ENCODE measurements at regions of chr1 and their contacts with region 1.

Region 1: DNA sequence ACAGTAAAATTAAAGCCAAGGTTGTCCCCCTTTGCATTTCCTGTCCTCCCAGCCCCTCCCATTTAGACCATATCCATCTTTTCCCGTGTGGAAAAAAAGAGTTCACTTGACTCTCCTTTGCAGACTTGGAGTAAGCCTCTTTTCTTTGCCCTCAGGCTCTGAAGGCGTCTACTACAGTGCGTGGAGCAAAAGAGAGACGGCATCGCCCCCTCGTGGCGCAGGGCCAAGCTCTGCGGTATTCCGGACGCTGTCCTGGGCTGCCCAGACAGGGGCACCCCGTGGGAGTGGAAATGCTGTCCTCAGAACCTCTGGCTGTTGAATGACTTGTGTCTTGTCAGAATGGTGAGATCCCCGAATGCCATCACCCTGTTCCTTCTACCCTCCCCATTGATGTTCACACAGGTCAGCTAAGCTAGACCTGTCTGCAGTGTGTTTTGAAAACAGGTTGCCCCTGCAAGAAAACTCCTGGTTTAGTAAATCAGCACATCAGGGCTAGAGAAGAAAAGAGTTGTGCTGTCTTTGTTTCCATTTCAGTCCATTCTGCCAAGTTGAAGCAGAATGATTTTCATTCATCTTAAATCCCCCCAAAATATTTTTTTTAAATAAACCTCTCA is 12.3 kb upstream of the GJA8 start:
- ATAC-seq: peak; percentile 84 to 100 (median 99)
- H3K4me3 ChIP-seq: no peak overlapping the region
- H3K27ac ChIP-seq: no peak overlapping the region
- H3K4me1 ChIP-seq: peaks cover 10 to 16% of the 10 kb centered on the region in 2 donors

Region 2: DNA sequence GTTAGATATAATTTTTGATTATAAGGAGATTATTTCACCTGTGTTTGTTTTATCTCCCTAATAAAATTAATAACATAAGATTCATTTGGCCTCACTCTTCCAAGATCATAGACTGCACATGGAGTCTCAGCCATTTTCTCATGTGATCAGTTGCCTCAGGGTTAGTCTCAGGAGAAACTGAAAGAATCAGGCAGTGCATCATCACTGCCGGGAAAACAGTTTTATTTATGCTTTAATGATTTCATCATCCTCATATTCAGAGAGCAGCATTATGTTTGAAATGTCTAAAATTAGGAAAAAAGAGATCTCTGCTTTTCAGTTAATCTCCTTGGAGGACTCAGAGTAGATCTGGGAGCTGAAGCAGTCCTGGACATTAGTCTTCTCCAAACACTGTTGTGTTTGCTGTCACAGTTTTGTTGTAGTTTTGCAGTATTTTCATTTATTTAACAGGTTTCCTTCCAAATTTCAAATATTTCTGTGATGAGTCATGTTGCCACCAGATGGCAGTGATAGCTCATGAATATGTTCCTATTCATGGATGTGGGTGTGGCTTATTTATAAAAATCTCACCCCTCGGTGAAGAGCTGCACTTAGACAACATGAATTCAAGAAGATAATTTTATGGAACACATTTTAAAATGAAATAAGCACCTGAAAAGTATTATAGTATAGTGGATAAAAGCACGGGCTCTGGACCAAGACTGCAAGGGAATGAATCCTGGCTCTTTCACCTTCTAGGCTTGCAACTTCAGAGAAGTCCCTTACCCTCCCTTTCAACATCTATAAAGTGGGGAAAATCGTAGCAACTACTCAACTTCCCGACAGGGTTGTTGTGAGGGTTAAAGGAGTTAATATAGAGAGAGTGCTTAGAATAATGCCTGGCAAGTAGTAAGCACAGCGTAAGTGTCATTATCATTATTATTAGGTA is 616.6 kb before region 1 on chr1:
- in situ Hi-C with region 1: loop called in 3 of 9 experiments (anchors 10 to 25 kb)
- ATAC-seq: peak; percentile 67 to 90 (median 84)
- H3K4me3 ChIP-seq: no peak overlapping the region
- H3K27ac ChIP-seq: no peak overlapping the region
- H3K4me1 ChIP-seq: peaks cover 0 to 2% of the 10 kb centered on the region in 2 donors

Region 3: GRCh38 chr1:147494998-147495580 is 395.2 kb before region 1 on chr1:
- in situ Hi-C with region 1: loop called in 8 of 9 experiments (anchors 5 to 25 kb)
- ATAC-seq: peak; percentile 97 to 100 (median 99)
- H3K4me3 ChIP-seq: no peak overlapping the region
- H3K27ac ChIP-seq: no peak overlapping the region
- H3K4me1 ChIP-seq: no peaks in the 10 kb centered on the region

Region 4: GRCh38 chr1:147670317-147671041 is 219.8 kb before region 1 on chr1 and contains the start of gene ACP6:
- in situ Hi-C with region 1: loop called in 1 of 9 experiments (anchors 25 kb)
- ATAC-seq: peak; percentile 81 to 99 (median 98)
- H3K4me3 ChIP-seq: peak within 1 kb of the TSS; percentile 40 to 54 (median 48)
- H3K27ac ChIP-seq: peak within 1 kb of the TSS in 1 of 2 donors; percentile 48
- H3K4me1 ChIP-seq: peaks cover 5 to 10% of the 10 kb centered on the region in 2 donors
- total RNA-seq, gene ACP6: 6.4 to 62.7 (median 14.3) TPM

Region 5: DNA sequence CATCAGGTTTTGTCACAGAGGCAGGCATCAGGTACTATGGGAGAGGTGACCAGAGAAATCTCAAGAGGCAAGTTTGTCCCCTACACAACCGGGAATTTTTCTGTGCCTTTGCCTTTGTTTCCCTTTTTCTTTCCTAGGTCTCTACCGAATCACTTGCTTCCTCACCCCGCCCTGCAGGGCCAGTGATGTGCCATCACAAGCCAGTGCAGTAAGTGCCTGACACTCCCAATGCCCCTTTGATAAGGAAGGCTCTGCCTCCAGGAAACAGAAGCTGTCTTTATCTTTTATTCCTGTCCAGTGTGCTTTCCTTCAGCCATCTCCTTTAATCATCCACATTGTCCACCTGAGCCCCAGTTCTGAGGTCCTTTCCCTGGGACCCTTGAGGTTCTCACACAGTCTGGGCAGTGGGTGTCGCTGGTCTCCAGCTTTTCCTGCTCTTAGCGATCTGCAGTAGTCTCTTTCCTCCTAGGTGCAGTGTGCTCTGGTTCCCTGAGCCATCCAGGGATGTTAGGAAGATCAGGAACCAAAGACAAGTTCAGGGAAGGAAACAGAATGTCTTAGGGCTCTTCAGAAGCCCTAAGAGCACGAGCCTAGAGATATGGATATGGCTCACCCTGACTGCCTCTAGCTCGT is 166.5 kb before region 1 on chr1:
- in situ Hi-C with region 1: loop called in 4 of 9 experiments (anchors 5 to 25 kb)
- ATAC-seq: peak; percentile 14 to 93 (median 72)
- H3K4me3 ChIP-seq: no peak overlapping the region
- H3K27ac ChIP-seq: no peak overlapping the region
- H3K4me1 ChIP-seq: peaks cover 0 to 9% of the 10 kb centered on the region in 2 donors

Region 6: DNA sequence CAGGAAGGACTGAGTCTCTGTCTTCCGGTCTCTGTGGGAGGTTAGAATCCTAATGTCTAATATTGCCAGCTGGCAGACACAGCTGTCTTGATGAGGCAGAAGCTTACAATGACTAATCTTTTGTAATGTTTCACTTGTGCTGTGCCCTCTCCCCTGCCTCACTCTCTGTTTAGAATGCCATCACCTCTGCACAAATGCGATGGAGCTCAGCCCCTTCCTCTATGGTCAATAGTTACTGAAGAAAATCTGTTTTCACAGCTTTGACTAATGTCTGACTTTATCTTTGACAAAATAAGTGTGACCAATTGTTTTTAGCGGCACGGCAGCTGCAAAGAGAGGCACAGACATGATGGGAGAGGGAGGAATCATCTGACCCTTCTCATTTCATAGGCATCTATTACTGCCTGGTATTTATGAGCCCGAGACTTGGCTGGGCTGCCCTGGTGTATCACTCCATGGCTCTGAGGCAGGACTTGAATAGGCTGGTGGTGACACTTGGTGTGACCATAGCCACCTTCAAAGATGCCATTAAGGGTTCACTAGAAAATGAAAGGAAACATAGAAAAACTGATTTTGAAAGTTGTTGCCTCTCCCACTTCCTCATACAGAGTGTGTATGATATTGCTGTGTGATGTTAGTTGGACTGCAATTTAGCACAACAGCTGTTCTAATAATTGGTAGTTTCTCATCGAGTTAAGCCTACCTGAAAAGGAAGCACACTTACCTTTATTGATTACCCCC is 425.0 kb after region 1 on chr1:
- in situ Hi-C with region 1: no loop called
- ATAC-seq: no peak
- H3K4me3 ChIP-seq: no peak overlapping the region
- H3K27ac ChIP-seq: no peak overlapping the region
- H3K4me1 ChIP-seq: peaks cover 0 to 6% of the 10 kb centered on the region in 2 donors

Measured in motor neuron (in vitro differentiated cells).